ENCODE measurements at regions of chr1 and their contacts with region 1.

Region 1: DNA sequence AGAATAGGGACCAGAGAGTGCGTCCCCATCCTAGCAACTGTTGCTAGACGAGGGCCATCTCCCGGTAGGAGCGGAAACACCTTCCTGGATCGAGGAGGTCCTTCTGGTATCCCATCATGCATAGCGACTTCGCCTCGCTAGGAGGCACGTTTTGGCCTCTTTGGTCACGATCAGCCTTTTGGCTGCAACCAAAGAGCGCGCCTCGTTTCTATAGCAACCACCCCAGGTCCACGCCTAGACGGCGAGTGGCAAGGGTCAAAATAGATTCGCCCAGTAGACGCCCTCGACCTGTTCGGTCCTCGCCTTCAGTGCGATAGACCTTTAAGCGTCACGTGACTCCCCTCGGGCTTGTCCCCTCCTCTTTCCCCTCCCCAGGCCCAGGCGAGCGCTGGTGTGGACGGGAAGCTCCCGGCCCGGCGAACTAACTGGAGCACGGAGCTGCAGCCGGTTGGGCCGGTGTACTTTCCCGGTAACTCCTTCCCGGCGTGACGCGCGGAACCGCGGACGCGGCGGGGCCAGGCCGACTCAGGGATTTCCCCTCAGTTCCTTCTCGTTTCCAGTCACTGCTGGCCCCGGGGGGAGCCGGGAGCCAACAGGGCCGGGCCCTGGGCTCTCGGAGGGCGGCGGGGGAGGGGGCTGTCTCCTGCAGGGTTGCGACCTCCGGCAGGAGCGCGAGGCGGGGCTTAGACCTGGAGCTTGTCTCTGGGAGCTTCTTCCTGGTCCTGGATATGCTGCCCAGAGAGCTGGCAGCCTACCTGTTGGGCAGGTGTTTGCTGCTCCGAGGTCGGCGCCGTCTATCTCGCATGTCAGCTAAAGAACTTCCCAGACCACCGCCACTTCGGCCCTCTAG is at the start of gene DNAJC16:
- DNase-seq: peak; percentile 100
- ATAC-seq: peak; percentile 77 to 81
- H3K4me3 ChIP-seq: peak within 1 kb of the TSS; percentile 92 to 99 (median 96)
- H3K27ac ChIP-seq: peak within 1 kb of the TSS; percentile 97 to 99 (median 98)
- H3K4me1 ChIP-seq: peaks cover 24 to 34% of the 10 kb centered on the region in 2 donors
- H3K27me3 ChIP-seq: no peaks in the 10 kb centered on the region
- CTCF ChIP-seq: peak in 3 of 5 experiments; percentile 24 to 65 (median 50)
- POLR2A ChIP-seq: peak; percentile 72 to 78
- total RNA-seq, gene DNAJC16: 20.0 to 43.1 (median 22.6) TPM

Region 2: GRCh38 chr1:15323351-15323988 is 203.2 kb before region 1 on chr1:
- in situ Hi-C with region 1: no loop called
- intact Hi-C with region 1: loop called (anchors 10 kb)
- DNase-seq: peak; percentile 35 to 49
- ATAC-seq: peak; percentile 71 to 72
- H3K4me3 ChIP-seq: no peak overlapping the region
- H3K27ac ChIP-seq: no peak overlapping the region
- H3K4me1 ChIP-seq: peaks cover under 1 to 3% of the 10 kb centered on the region in 2 donors
- H3K27me3 ChIP-seq: peaks cover 0 to 3% (median 0%) of the 10 kb centered on the region in 3 donors
- CTCF ChIP-seq: peak; percentile 80 to 98 (median 89)
- POLR2A ChIP-seq: no peak

Region 3: DNA sequence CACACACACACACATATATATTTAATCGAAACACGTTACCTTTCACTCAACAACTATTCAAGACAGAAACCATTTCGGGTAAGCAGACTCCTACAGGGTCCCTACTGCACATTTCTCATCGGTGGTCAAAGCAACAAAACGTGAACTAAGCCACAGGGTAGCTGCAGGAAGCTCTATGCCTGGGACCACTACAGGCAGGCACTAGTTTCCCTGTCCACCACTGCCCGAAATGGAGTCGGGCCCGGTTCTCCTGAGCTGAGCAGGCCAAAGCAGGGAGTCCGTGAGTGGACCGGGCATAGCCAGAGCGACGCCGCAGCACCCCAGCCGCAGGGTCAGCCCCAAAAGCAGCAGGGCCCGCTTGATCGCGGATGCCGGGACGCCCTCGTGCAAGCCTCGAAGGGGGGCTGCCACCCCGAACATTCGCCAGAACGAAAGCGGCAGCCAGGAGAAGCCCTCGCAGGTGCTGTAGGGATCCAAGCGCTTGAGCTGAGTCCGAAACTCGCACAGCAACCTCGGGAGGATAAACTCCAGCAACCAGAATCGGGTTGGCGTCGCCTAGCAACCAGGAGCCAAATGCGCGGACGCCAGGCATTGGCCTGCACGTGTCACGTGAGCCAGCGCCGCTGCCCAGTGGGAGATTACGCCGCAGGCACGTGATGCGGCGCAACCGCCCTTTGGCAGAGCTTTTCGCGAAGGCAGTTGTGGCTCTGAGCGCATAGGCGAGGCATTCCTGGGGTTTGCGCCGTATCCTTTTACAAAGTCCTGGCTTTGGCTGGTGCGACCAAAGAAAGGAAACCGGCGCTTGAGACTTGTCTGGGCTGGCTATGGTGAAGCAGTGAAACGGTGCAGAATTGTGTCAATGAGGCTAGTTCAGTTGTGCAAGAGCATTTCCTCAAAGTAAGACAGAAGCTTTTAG is 76.6 kb after region 1 on chr1:
- in situ Hi-C with region 1: no loop called
- intact Hi-C with region 1: loop called (anchors 1 kb)
- DNase-seq: peak; percentile 98
- ATAC-seq: peak; percentile 88 to 90
- H3K4me3 ChIP-seq: peak overlapping the region; percentile 58 to 86 (median 72)
- H3K27ac ChIP-seq: peak overlapping the region; percentile 82 to 93 (median 86)
- H3K4me1 ChIP-seq: peaks cover 19 to 31% of the 10 kb centered on the region in 2 donors
- H3K27me3 ChIP-seq: no peaks in the 10 kb centered on the region
- CTCF ChIP-seq: no peak
- POLR2A ChIP-seq: peak; percentile 71 to 89

Region 4: DNA sequence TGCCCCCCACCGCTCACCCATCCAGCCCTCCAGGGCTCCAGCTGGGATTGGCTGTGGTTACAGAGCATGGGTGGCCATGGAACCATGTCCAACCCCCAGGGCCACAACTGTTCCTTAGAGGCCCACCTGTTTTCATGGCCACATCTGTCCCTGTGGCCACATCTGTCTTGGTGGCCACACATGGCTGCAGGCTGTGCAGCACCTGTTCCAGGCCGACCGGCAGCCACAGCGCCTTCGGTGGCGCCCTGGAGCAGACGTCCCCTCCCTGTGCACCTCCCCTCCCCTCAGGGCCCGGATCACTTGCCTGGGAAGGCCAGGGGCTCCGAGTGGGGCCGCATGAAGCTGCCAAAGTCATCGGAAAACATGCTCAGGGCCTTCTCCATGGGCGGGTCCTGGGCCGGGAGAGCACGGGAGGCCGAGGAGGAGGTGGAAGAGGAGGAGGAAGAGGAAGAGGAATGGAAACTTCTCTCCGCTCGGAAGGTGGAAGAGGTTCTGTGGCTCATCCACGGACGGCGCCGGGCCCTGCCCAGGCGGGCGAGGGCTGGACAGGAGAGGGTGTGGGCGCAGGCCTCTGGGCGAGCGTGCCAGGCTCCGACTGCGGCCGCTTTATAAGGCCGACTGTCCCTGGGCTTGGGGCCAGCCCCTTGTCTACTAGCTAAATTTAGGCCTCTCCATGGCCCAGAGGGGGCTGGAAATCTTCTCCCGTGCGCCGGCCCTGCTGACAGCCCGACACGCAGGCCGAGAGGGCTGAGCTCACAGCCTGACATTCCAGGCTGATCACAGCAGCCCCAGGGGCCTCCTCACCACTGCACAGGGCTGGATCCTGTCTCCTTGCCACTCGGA is 491.0 kb after region 1 on chr1 and contains the start of gene HSPB7:
- in situ Hi-C with region 1: no loop called
- intact Hi-C with region 1: no loop called
- DNase-seq: peak; percentile 91 to 97
- ATAC-seq: peak; percentile 20 to 26
- H3K4me3 ChIP-seq: peak within 1 kb of the TSS; percentile 68 to 82 (median 76)
- H3K27ac ChIP-seq: peak within 1 kb of the TSS; percentile 97 to 100 (median 98)
- H3K4me1 ChIP-seq: peaks cover 43 to 59% of the 10 kb centered on the region in 2 donors
- H3K27me3 ChIP-seq: no peaks in the 10 kb centered on the region
- CTCF ChIP-seq: peak in 2 of 5 experiments; percentile 20 to 29
- POLR2A ChIP-seq: peak in 1 of 2 donors; percentile 97
- total RNA-seq, gene HSPB7: 355 to 1,466 (median 716) TPM